Stomach (tissue), 19 donors: ENCODE measurements at regions of chr18 and their contacts with region 1.

Region 1: GRCh38 chr18:54679318-54680149 is 88.5 kb downstream of the DYNAP start:
- DNase-seq: peak in 1 of 2 donors; percentile 89
- H3K4me3 ChIP-seq: no peak overlapping the region
- H3K27ac ChIP-seq: no peak overlapping the region
- H3K4me1 ChIP-seq: peaks cover 0 to 4% (median 0%) of the 10 kb centered on the region in 4 donors
- H3K27me3 ChIP-seq: no peaks in the 10 kb centered on the region
- CTCF ChIP-seq: peak in 4 of 7 experiments; percentile 38 to 83 (median 60)
- EP300 ChIP-seq: no peak
- POLR2A ChIP-seq: no peak

Region 2: GRCh38 chr18:54444319-54444914 is 235.1 kb before region 1 on chr18:
- intact Hi-C with region 1: loop called (anchors 10 kb)
- DNase-seq: peak; percentile 49 to 84
- H3K4me3 ChIP-seq: no peak overlapping the region
- H3K27ac ChIP-seq: no peak overlapping the region
- H3K4me1 ChIP-seq: no peaks in the 10 kb centered on the region
- H3K27me3 ChIP-seq: peaks cover 0 to 12% (median 0%) of the 10 kb centered on the region in 3 donors
- CTCF ChIP-seq: peak in 5 of 7 experiments; percentile 35 to 60 (median 47)
- EP300 ChIP-seq: no peak
- POLR2A ChIP-seq: no peak

Region 3: GRCh38 chr18:54983041-54983686 is 303.6 kb after region 1 on chr18:
- intact Hi-C with region 1: loop called (anchors 10 kb)
- DNase-seq: peak in 1 of 2 donors; percentile 82
- H3K4me3 ChIP-seq: no peak overlapping the region
- H3K27ac ChIP-seq: no peak overlapping the region
- H3K4me1 ChIP-seq: no peaks in the 10 kb centered on the region
- H3K27me3 ChIP-seq: no peaks in the 10 kb centered on the region
- CTCF ChIP-seq: peak in 5 of 7 experiments; percentile 42 to 76 (median 59)
- EP300 ChIP-seq: no peak
- POLR2A ChIP-seq: no peak